GM10248 (cell line): ENCODE measurements at regions of chr10 and their contacts with region 1.

Region 1: DNA sequence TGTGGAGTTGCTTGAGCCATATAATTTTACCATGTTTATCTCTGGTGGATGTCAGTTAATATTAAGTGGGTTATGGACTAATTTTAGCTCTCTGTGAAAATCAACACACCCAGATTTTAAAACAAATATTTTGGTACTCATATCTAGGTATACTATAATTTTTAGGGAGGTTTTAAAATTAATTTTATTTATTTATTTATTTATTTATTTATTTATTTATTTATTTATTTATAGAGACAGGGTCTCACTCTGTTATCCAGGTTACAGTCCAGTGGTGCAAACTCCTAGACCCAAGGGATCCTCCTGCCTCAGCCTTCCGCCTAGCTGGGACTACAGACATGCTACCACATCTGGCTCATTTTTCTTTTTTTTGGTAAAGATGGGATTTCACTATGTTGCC is 7.3 kb upstream of the CREM start:
- DNase-seq: no peak
- CTCF ChIP-seq: no peak

Region 2: DNA sequence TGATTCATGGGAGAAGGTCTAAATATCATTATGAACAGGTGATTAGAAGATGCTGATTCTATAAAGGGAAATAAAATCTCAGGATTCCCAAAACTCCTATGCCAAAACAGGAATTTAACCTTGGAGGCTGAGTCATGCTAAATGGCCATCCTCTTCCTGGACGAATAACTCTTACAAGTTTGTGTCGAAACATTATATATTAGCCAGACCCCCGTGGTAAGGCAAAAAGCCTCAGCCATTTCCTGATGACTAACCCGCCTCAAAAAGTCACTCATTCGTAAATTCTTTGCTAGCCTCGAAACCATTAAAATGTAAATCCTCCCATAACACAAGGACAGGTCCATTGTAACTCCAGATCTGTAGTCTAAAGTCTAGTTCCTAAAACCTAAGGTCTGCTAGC is 61.2 kb before region 1 on chr10:
- CTCF ChIA-PET with region 1: no interaction called
- POLR2A ChIA-PET with region 1: no interaction called
- DNase-seq: peak; percentile 30
- CTCF ChIP-seq: no peak

Region 3: GRCh38 chr10:35103882-35104281 is 15.5 kb before region 1 on chr10:
- CTCF ChIA-PET with region 1: interaction called, 12 read pairs
- POLR2A ChIA-PET with region 1: no interaction called
- DNase-seq: no peak
- CTCF ChIP-seq: no peak

Region 4: GRCh38 chr10:35208536-35208935 is 89.2 kb after region 1 on chr10:
- CTCF ChIA-PET with region 1: interaction called, 225 read pairs
- POLR2A ChIA-PET with region 1: no interaction called
- DNase-seq: no peak
- CTCF ChIP-seq: no peak